Heart right ventricle (tissue), 16 donors: ENCODE measurements at regions of chr9 and their contacts with region 1.

Region 1: GRCh38 chr9:70924895-70925547 is 196.4 kb downstream of the TRPM3 start:
- DNase-seq: peak in 1 of 2 donors; percentile 29
- ATAC-seq: peak; percentile 74 to 96 (median 83)
- H3K4me3 ChIP-seq: peak overlapping the region in 4 of 10 donors; percentile 8 to 37 (median 28)
- H3K27ac ChIP-seq: no peak overlapping the region
- H3K4me1 ChIP-seq: peaks cover 0 to 4% (median 0%) of the 10 kb centered on the region in 9 donors
- H3K27me3 ChIP-seq: no peaks in the 10 kb centered on the region
- CTCF ChIP-seq: peak; percentile 40 to 84 (median 70)

Region 2: GRCh38 chr9:70639853-70640814 is 284.9 kb before region 1 on chr9:
- intact Hi-C with region 1: loop called in 2 of 10 experiments (anchors 5 to 10 kb)
- DNase-seq: no peak
- ATAC-seq: peak in 6 of 8 donors; percentile 55 to 75 (median 62)
- H3K4me3 ChIP-seq: no peak overlapping the region
- H3K27ac ChIP-seq: no peak overlapping the region
- H3K4me1 ChIP-seq: no peaks in the 10 kb centered on the region
- H3K27me3 ChIP-seq: no peaks in the 10 kb centered on the region
- CTCF ChIP-seq: peak; percentile 32 to 78 (median 68)

Region 3: GRCh38 chr9:70979966-70980365 is 54.9 kb after region 1 on chr9:
- intact Hi-C with region 1: no loop called
- DNase-seq: no peak
- ATAC-seq: no peak
- H3K4me3 ChIP-seq: no peak overlapping the region
- H3K27ac ChIP-seq: no peak overlapping the region
- H3K4me1 ChIP-seq: no peaks in the 10 kb centered on the region
- H3K27me3 ChIP-seq: no peaks in the 10 kb centered on the region
- CTCF ChIP-seq: no peak

Region 4: DNA sequence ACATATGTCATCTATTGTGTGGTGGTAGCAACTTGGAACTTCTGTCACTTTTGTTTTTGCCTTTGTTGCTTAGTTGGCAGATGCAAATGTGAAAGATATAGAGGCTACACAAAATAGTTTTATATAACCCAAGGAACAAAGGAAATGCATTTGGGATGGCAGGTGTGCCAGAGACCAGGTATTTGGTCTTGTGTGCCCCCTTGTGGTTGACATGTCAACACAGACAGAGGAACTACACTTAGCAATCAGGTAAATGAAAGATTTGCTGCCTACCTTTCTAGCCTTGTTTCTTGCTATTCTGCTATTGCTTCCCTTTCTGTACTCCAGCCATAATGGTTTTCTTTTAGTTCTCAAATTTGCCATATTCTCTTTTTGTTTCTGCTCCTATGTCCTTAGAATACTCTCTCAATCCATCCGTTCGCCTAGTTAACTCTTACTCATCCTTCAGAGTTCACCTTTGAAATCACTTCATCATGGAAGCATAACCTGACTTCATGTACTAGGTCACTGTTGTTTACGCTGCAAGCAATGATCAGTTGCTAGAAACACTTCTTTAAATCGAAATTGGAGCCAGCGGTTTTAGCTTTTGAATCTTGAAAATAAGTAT is 76.9 kb after region 1 on chr9:
- intact Hi-C with region 1: loop called in 1 of 10 experiments (anchors 5 kb)
- DNase-seq: peak in 1 of 2 donors; percentile 10
- ATAC-seq: no peak
- H3K4me3 ChIP-seq: no peak overlapping the region
- H3K27ac ChIP-seq: no peak overlapping the region
- H3K4me1 ChIP-seq: no peaks in the 10 kb centered on the region
- H3K27me3 ChIP-seq: no peaks in the 10 kb centered on the region
- CTCF ChIP-seq: peak in 8 of 9 donors; percentile 24 to 58 (median 42)

Region 5: GRCh38 chr9:71249729-71250317 is 324.8 kb after region 1 on chr9:
- intact Hi-C with region 1: loop called in 8 of 10 experiments (anchors 2 to 10 kb)
- DNase-seq: peak in 1 of 2 donors; percentile 14
- ATAC-seq: peak in 6 of 8 donors; percentile 25 to 71 (median 52)
- H3K4me3 ChIP-seq: no peak overlapping the region
- H3K27ac ChIP-seq: no peak overlapping the region
- H3K4me1 ChIP-seq: peaks cover 0 to 4% (median 0%) of the 10 kb centered on the region in 9 donors
- H3K27me3 ChIP-seq: peaks cover 0 to 22% (median 0%) of the 10 kb centered on the region in 7 donors
- CTCF ChIP-seq: peak; percentile 22 to 85 (median 73)

Region 6: DNA sequence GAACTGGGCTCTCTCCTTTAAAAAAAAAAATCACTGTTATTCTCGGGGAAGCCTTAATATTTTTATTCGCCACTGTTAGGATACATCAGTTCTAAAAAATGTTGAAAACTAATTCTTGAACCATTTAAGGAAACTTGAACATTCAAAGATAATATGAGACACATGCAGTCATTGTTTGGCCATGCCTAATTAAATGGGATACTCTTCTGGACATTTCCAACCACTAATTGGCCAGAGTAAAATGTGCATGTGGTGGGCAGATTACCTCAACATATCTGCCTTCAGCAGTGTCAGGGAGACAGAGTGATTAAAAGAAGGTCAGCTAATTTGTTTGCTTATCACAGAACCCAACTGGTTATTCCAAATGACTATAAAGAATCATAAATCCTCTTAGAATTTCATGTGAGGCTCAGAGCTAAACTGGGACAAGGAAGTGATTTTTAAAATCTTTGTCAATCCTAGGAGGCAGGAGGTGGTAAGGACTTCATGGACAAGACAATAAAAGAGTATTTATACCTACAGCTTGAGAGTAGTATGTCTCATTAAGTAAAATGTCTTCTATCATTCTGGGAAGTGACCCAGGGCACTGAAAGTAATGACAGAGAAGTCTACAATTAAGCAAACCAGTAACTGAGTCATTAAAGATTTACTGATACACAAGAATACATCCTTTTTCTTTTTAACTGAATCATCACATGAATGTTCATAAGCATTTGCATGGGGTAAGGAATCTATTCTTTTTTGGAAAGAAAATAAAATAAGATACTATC is 439.4 kb after region 1 on chr9:
- intact Hi-C with region 1: no loop called
- DNase-seq: no peak
- ATAC-seq: no peak
- H3K4me3 ChIP-seq: no peak overlapping the region
- H3K27ac ChIP-seq: no peak overlapping the region
- H3K4me1 ChIP-seq: no peaks in the 10 kb centered on the region
- H3K27me3 ChIP-seq: no peaks in the 10 kb centered on the region
- CTCF ChIP-seq: no peak